Activated CD4-positive, alpha-beta T cell treated with anti-CD3 and anti-CD28 coated beads, Interleukin-2, amount 10 ng/mL, durations not matched to agents 24 days and 14 days (primary cell): ENCODE measurements at regions of chr12 and their contacts with region 1.

Region 1: GRCh38 chr12:55728939-55729823 is at the start of gene CD63:
- DNase-seq: peak; percentile 89
- H3K4me3 Mint-ChIP-seq: peak within 1 kb of the TSS; percentile 92
- H3K27ac Mint-ChIP-seq: peak within 1 kb of the TSS; percentile 95
- H3K4me1 Mint-ChIP-seq: peaks cover 36% of the 10 kb centered on the region
- H3K27me3 Mint-ChIP-seq: no peaks in the 10 kb centered on the region
- total RNA-seq, gene CD63: 190 and 196 TPM in 2 replicates

Region 2: GRCh38 chr12:55715833-55716581 is 13.2 kb before region 1 on chr12 and contains the start of gene BLOC1S1:
- intact Hi-C with region 1: loop called (anchors 1 kb)
- DNase-seq: peak; percentile 98
- H3K4me3 Mint-ChIP-seq: peak within 1 kb of the TSS; percentile 98
- H3K27ac Mint-ChIP-seq: peak within 1 kb of the TSS; percentile 98
- H3K4me1 Mint-ChIP-seq: peaks cover 27% of the 10 kb centered on the region
- H3K27me3 Mint-ChIP-seq: peaks cover 15% of the 10 kb centered on the region
- total RNA-seq, gene BLOC1S1: 62.7 and 64.8 TPM in 2 replicates

Region 3: GRCh38 chr12:56041552-56042429 is 312.6 kb after region 1 on chr12 and contains the start of gene RPS26:
- intact Hi-C with region 1: no loop called
- DNase-seq: peak; percentile 97
- H3K4me3 Mint-ChIP-seq: peak within 1 kb of the TSS; percentile 100
- H3K27ac Mint-ChIP-seq: peak within 1 kb of the TSS; percentile 99
- H3K4me1 Mint-ChIP-seq: peaks cover 50% of the 10 kb centered on the region
- H3K27me3 Mint-ChIP-seq: no peaks in the 10 kb centered on the region
- total RNA-seq, gene RPS26: 40.5 and 46.3 TPM in 2 replicates